ENCODE measurements at regions of chr17 and their contacts with region 1.

Region 1: GRCh38 chr17:75927286-75927922 is 13.4 kb downstream of the FBF1 start:
- DNase-seq: peak in 1 of 2 donors; percentile 35
- H3K4me3 ChIP-seq: no peak overlapping the region
- H3K27ac ChIP-seq: no peak overlapping the region
- H3K4me1 ChIP-seq: no peaks in the 10 kb centered on the region
- H3K27me3 ChIP-seq: no peaks in the 10 kb centered on the region
- CTCF ChIP-seq: no peak
- POLR2A ChIP-seq: no peak

Region 2: GRCh38 chr17:75319904-75320691 is 607.3 kb before region 1 on chr17:
- intact Hi-C with region 1: no loop called
- DNase-seq: no peak
- H3K4me3 ChIP-seq: no peak overlapping the region
- H3K27ac ChIP-seq: no peak overlapping the region
- H3K4me1 ChIP-seq: no peaks in the 10 kb centered on the region
- H3K27me3 ChIP-seq: no peaks in the 10 kb centered on the region
- CTCF ChIP-seq: no peak
- POLR2A ChIP-seq: no peak

Region 3: GRCh38 chr17:75940724-75941441 is 13.5 kb after region 1 on chr17 and contains the start of gene FBF1:
- intact Hi-C with region 1: loop called (anchors 2 kb)
- DNase-seq: peak; percentile 91 to 92
- H3K4me3 ChIP-seq: peak within 1 kb of the TSS; percentile 62 to 96 (median 89)
- H3K27ac ChIP-seq: peak within 1 kb of the TSS; percentile 85 to 86
- H3K4me1 ChIP-seq: no peaks in the 10 kb centered on the region
- H3K27me3 ChIP-seq: no peaks in the 10 kb centered on the region
- CTCF ChIP-seq: peak in 1 of 3 donors; percentile 6
- POLR2A ChIP-seq: peak; percentile 70
- total RNA-seq, gene FBF1: 7.7 to 18.7 (median 17.7) TPM

Measured in breast epithelium (tissue), 4 donors.